ENCODE measurements at regions of chr6 and their contacts with region 1.

Region 1: DNA sequence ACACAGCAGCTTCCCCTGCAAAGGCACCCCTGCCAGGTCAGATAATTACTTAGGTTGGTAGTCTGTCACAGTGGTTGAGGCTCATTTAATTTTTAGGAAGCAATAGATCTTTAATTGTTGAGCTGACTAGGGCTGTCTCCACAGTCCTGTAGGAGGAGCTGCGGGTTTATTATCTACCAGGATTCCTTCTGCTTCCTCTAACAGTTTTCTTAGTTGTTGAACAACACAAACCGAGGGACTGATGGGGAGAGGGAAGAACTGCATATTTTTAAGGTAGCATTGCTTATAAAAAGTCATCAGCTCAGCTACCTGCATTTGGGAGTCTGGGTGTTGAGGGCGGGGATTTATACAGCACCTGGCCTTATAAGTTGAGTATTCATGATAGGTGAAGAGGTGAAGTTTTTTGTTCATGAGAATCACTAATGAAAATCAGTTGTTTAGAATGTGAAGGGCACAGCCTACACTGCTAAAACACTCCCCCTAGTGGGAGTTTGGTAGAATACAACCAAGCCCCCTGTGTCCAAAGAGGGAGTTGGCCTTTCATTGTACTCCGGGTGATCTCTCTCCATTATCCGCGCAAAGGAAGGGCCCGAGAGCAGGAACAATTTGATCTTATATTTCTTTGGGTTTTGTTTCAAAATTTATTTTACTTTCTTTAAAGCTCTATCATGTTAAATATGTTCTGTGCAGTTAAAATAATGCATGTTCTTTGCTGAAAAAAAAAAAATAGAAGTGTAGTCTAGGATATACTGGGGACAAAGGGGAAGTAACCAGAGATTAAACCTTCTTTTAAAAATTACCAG is 69.6 kb downstream of the SSR1 start:
- DNase-seq: no peak
- H3K4me3 ChIP-seq: no peak overlapping the region
- H3K27ac ChIP-seq: peak overlapping the region; percentile 27 to 45 (median 41)
- H3K4me1 ChIP-seq: peaks cover 12 to 27% (median 24%) of the 10 kb centered on the region in 4 donors
- H3K27me3 ChIP-seq: no peaks in the 10 kb centered on the region
- CTCF ChIP-seq: peak; percentile 89 to 90 (median 90)
- EP300 ChIP-seq: no peak
- POLR2A ChIP-seq: no peak

Region 2: GRCh38 chr6:6676910-6677441 is 566.4 kb before region 1 on chr6:
- intact Hi-C with region 1: loop called (anchors 5 kb)
- DNase-seq: peak; percentile 98
- H3K4me3 ChIP-seq: no peak overlapping the region
- H3K27ac ChIP-seq: peak overlapping the region in 3 of 4 donors; percentile 19 to 42 (median 27)
- H3K4me1 ChIP-seq: peaks cover 6 to 13% (median 7%) of the 10 kb centered on the region in 4 donors
- H3K27me3 ChIP-seq: no peaks in the 10 kb centered on the region
- CTCF ChIP-seq: peak; percentile 95 to 99 (median 98)
- EP300 ChIP-seq: no peak
- POLR2A ChIP-seq: no peak

Region 3: GRCh38 chr6:6724539-6725467 is 518.6 kb before region 1 on chr6:
- intact Hi-C with region 1: loop called (anchors 2 kb)
- DNase-seq: peak; percentile 93
- H3K4me3 ChIP-seq: peak overlapping the region; percentile 44 to 55 (median 48)
- H3K27ac ChIP-seq: peak overlapping the region; percentile 65 to 80 (median 71)
- H3K4me1 ChIP-seq: peaks cover 19 to 32% (median 23%) of the 10 kb centered on the region in 4 donors
- H3K27me3 ChIP-seq: no peaks in the 10 kb centered on the region
- CTCF ChIP-seq: peak; percentile 62 to 72 (median 64)
- EP300 ChIP-seq: no peak
- POLR2A ChIP-seq: no peak

Region 4: DNA sequence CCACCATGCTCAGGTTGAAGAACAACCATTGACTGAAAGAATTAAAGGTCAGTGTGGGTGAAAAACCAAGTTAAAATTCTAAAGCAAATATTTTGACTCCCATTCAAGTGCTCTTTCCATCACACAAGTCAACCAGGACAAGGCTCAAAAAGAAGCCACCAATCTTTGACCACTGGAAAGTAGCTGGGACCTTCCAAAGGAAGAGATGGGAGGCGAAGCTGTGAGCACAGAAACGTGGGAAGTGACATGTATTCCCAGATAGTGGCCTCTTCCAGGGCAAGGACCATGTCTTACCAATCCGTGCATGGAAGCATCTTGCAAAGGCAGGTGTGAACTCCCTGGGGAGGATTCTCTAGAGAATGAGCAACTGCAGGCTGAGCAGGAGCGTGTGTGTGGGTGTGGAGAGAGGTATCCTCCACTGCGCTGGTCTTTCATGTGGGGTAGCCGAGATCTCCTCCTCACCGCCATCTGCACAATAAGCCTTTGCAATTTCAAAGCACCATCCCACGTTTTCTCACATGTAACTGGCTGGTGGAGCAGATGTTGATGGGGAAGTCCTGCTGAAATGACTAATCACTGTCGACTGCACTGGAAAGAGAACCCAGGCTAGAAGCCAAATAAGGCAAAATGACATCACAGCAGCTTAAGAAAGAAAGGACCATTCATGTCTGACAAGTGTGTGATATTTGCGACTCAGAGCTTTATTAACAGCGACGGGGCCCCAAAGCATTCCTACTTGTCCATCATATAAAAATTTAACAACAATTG is 325.0 kb before region 1 on chr6:
- intact Hi-C with region 1: loop called (anchors 10 kb)
- DNase-seq: no peak
- H3K4me3 ChIP-seq: no peak overlapping the region
- H3K27ac ChIP-seq: no peak overlapping the region
- H3K4me1 ChIP-seq: peaks cover 16 to 30% (median 24%) of the 10 kb centered on the region in 4 donors
- H3K27me3 ChIP-seq: no peaks in the 10 kb centered on the region
- CTCF ChIP-seq: no peak
- EP300 ChIP-seq: no peak
- POLR2A ChIP-seq: no peak

Region 5: DNA sequence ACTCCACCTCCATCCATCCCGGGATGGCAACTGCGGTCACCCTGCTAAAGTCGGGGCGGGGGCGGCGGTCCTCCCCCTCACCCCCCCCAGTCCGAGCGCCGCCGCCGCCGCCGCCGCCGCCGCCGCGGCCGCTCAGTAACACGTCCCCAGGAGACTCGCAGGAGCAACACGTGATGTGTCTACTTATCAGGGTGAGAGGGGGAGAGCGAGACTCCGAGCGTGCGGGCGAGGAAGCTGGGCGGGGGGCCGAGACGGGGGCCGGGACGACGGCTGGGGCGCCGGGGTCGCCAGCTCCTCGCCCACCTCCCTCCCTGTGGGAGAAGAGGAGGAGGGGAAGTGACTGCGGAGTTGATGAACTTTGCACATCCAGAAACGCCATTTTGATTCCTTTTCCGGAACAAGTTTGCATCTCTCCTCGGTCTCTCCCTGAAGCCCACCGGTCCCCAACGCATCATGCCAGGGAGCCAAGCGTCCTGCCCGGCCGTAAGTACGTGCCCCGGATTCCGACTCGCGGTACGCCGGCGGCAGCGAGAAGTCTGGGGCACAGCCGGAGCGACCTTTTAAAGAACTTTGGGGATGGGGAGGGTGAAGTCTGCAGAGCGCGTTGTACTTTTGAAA is 135.7 kb before region 1 on chr6 and contains the start of gene RREB1:
- intact Hi-C with region 1: loop called (anchors 5 kb)
- DNase-seq: no peak
- H3K4me3 ChIP-seq: peak within 1 kb of the TSS; percentile 78 to 99 (median 90)
- H3K27ac ChIP-seq: peak within 1 kb of the TSS; percentile 95 to 99 (median 98)
- H3K4me1 ChIP-seq: peaks cover 13 to 45% (median 39%) of the 10 kb centered on the region in 4 donors
- H3K27me3 ChIP-seq: no peaks in the 10 kb centered on the region
- CTCF ChIP-seq: no peak
- EP300 ChIP-seq: no peak
- POLR2A ChIP-seq: peak; percentile 61
- total RNA-seq, gene RREB1: 17.7 to 36.6 (median 28.8) TPM

Region 6: DNA sequence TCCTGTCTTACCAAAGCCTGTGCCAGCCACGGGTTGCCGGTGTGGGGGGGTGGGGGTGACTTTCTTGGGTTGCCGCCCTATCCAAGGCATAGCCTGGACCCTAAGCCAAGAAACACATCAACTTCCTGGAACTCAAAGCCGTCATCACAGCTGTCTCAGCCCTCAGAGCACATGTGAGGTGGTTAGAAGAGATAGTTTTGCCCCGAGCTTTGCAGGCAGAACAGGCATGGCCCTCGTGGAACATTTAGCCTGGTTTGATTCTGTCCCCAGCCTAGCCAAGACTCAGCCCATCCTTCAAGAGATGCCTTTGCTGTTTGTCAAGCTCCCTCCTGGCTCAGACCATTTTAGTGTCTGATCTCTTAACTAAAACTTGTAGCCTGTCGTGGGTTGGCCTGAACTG is 70.7 kb before region 1 on chr6:
- intact Hi-C with region 1: no loop called
- DNase-seq: no peak
- H3K4me3 ChIP-seq: no peak overlapping the region
- H3K27ac ChIP-seq: peak overlapping the region in 2 of 4 donors; percentile 17 to 27
- H3K4me1 ChIP-seq: peaks cover 75 to 92% (median 77%) of the 10 kb centered on the region in 4 donors
- H3K27me3 ChIP-seq: no peaks in the 10 kb centered on the region
- CTCF ChIP-seq: no peak
- EP300 ChIP-seq: no peak
- POLR2A ChIP-seq: no peak

Measured in esophagus muscularis mucosa (tissue), 4 donors.